CD4-positive, alpha-beta memory T cell (primary cell): ENCODE measurements at regions of chr14 and their contacts with region 1.

Region 1: DNA sequence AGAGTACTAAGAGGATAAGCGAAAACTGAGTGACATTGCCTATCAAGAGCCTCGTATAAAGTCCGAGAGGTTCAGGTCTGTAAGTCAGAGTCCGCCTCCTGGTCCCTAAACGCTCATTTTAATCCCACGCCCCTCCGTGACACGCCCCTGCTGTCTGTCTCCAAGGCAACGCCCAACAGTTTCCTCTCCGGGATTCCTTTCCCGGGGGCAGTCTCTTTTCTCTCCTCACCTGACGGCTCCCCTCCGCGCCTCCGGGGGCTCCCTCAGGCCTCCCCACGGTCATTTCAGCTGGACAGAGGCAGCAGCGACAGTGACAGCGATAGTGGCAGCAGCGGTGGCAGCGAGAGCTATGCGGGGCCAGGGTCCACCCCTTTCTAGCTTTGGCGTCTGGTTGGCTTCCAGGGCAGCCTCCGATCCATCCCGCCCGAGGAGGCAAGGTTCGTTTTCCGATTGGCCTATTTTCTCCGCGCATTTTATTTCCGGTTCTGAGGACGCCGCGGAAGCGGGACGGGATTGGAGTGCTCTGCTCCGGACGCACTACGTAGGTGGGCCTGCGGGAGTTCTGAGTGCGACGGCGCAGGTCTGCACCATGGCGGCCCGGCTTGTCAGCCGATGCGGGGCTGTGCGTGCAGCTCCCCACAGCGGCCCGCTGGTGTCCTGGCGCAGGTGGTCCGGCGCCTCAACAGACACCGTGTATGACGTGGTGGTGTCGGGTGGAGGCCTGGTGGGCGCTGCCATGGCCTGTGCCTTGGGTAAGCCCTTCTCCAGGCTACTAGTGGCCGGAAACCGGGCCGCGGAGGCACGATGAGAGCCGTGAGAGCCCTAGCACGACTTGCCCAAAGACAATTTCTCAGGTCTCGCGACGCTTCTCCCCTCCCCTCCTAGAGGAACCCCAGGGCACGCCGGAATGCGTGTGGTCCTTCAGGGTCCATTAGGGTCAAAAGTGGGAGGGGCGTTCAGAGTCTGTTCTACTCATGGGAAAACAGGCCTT is at the starts of genes COQ6 and FAM161B:
- DNase-seq: peak; percentile 94 to 97 (median 95)
- H3K4me3 ChIP-seq: peak within 1 kb of the TSS; percentile 93 to 99
- H3K4me3 Mint-ChIP-seq: peak within 1 kb of the TSS; percentile 93 to 100 (median 98)
- H3K27ac ChIP-seq: peak within 1 kb of the TSS; percentile 84
- H3K27ac Mint-ChIP-seq: peak within 1 kb of the TSS; percentile 94 to 99 (median 97)
- H3K4me1 ChIP-seq: peaks cover 11% of the 10 kb centered on the region
- H3K4me1 Mint-ChIP-seq: peaks cover 13 to 25% (median 22%) of the 10 kb centered on the region in 4 donors
- H3K27me3 ChIP-seq: no peaks in the 10 kb centered on the region
- H3K27me3 Mint-ChIP-seq: no peaks in the 10 kb centered on the region
- total RNA-seq, gene COQ6: 38.7 to 41.1 TPM
- total RNA-seq, gene FAM161B: 5.8 to 6.5 TPM

Region 2: GRCh38 chr14:73208390-73208789 is 741.6 kb before region 1 on chr14:
- CTCF ChIA-PET with region 1: no interaction called
- POLR2A ChIA-PET with region 1: no interaction called
- intact Hi-C with region 1: no loop called
- DNase-seq: no peak
- H3K4me3 ChIP-seq: no peak overlapping the region
- H3K4me3 Mint-ChIP-seq: no peak overlapping the region
- H3K27ac ChIP-seq: no peak overlapping the region
- H3K27ac Mint-ChIP-seq: no peak overlapping the region
- H3K4me1 ChIP-seq: no peaks in the 10 kb centered on the region
- H3K4me1 Mint-ChIP-seq: no peaks in the 10 kb centered on the region
- H3K27me3 ChIP-seq: no peaks in the 10 kb centered on the region
- H3K27me3 Mint-ChIP-seq: no peaks in the 10 kb centered on the region

Region 3: GRCh38 chr14:73851644-73852382 is 98.2 kb before region 1 on chr14 and contains the start of gene PTGR2:
- CTCF ChIA-PET with region 1: no interaction called
- POLR2A ChIA-PET with region 1: interaction called, 7 read pairs
- intact Hi-C with region 1: loop called (anchors 1 kb)
- DNase-seq: peak; percentile 88 to 93 (median 91)
- H3K4me3 ChIP-seq: peak within 1 kb of the TSS; percentile 42 to 91
- H3K4me3 Mint-ChIP-seq: peak within 1 kb of the TSS; percentile 92 to 99 (median 94)
- H3K27ac ChIP-seq: peak within 1 kb of the TSS; percentile 66
- H3K27ac Mint-ChIP-seq: peak within 1 kb of the TSS; percentile 93 to 99 (median 98)
- H3K4me1 ChIP-seq: peaks cover 17% of the 10 kb centered on the region
- H3K4me1 Mint-ChIP-seq: peaks cover 9 to 24% (median 17%) of the 10 kb centered on the region in 4 donors
- H3K27me3 ChIP-seq: no peaks in the 10 kb centered on the region
- H3K27me3 Mint-ChIP-seq: no peaks in the 10 kb centered on the region
- total RNA-seq, gene PTGR2: 4.5 to 5.0 TPM

Region 4: DNA sequence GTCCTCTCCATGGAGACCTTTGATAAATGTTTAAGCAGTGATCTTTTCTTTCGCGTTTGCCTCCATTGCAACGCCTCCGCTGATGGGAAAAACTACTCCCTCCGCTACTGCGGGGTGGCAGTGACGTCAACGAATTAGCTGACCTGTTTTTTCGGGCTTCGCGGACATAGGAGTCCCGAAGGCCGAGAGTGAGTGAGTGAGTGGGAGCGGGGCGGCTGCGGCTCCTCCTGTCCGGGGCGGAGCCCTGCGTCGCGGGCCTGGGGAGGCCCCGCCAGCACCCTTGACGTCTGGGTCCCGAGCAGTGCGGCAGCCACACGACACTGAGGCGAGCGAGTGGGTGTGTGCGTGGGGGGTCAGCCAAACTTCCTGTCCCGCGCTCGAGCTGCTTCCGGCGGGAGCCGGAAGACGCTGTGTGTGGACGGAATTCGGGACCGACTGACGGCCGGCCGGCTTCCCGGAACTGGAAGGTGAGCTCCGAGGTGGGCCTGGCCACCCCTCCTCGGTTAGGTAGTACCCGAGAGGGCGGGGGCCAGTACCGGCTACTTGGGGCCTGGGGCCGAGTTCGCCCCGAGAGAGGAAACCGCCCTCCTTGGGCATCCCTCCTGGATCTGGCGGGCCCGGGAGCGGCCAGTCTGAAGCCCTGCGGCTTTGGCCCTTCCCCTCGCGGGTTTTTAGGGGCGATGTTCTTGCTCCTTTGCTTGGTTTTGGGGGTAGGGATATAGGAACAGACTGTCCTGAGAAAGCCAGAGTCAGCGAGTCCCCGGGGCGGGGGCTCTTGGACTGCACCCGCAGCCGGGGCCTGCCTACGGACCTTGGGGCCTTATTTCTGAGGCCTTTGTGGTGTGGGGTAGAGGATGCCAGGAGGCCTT is 63.4 kb before region 1 on chr14 and contains the start of gene ZNF410:
- CTCF ChIA-PET with region 1: no interaction called
- POLR2A ChIA-PET with region 1: interaction called, 8 read pairs
- intact Hi-C with region 1: loop called (anchors 2 kb)
- DNase-seq: peak; percentile 84 to 90 (median 86)
- H3K4me3 ChIP-seq: peak within 1 kb of the TSS; percentile 89
- H3K4me3 Mint-ChIP-seq: peak within 1 kb of the TSS; percentile 89 to 99 (median 98)
- H3K27ac ChIP-seq: peak within 1 kb of the TSS; percentile 96
- H3K27ac Mint-ChIP-seq: peak within 1 kb of the TSS; percentile 85 to 100 (median 99)
- H3K4me1 ChIP-seq: peaks cover 43% of the 10 kb centered on the region
- H3K4me1 Mint-ChIP-seq: peaks cover 34 to 55% (median 42%) of the 10 kb centered on the region in 4 donors
- H3K27me3 ChIP-seq: no peaks in the 10 kb centered on the region
- H3K27me3 Mint-ChIP-seq: no peaks in the 10 kb centered on the region
- total RNA-seq, gene ZNF410: 46.2 to 47.3 TPM

Region 5: GRCh38 chr14:74018586-74019407 is 68.8 kb after region 1 on chr14 and contains the starts of genes BBOF1 and ENTPD5:
- CTCF ChIA-PET with region 1: interaction called, 4 read pairs
- POLR2A ChIA-PET with region 1: interaction called, 4 read pairs
- intact Hi-C with region 1: loop called (anchors 1 kb)
- DNase-seq: peak; percentile 88 to 91 (median 91)
- H3K4me3 ChIP-seq: peak within 1 kb of the TSS; percentile 87 to 94
- H3K4me3 Mint-ChIP-seq: peak within 1 kb of the TSS; percentile 93 to 98 (median 94)
- H3K27ac ChIP-seq: peak within 1 kb of the TSS; percentile 92
- H3K27ac Mint-ChIP-seq: peak within 1 kb of the TSS; percentile 94 to 99 (median 99)
- H3K4me1 ChIP-seq: peaks cover 12% of the 10 kb centered on the region
- H3K4me1 Mint-ChIP-seq: peaks cover 6 to 22% (median 11%) of the 10 kb centered on the region in 4 donors
- H3K27me3 ChIP-seq: no peaks in the 10 kb centered on the region
- H3K27me3 Mint-ChIP-seq: no peaks in the 10 kb centered on the region
- total RNA-seq, gene BBOF1: 2.6 TPM
- total RNA-seq, gene ENTPD5: 15.0 to 16.2 TPM

Region 6: GRCh38 chr14:74084277-74085046 is 134.4 kb after region 1 on chr14 and contains the starts of genes ALDH6A1 and LIN52:
- CTCF ChIA-PET with region 1: no interaction called
- POLR2A ChIA-PET with region 1: no interaction called
- intact Hi-C with region 1: loop called (anchors 1 kb)
- DNase-seq: peak; percentile 99 to 100 (median 100)
- H3K4me3 ChIP-seq: peak within 1 kb of the TSS; percentile 68 to 86
- H3K4me3 Mint-ChIP-seq: peak within 1 kb of the TSS; percentile 95 to 99 (median 98)
- H3K27ac ChIP-seq: peak within 1 kb of the TSS; percentile 60
- H3K27ac Mint-ChIP-seq: peak within 1 kb of the TSS; percentile 90 to 99 (median 96)
- H3K4me1 ChIP-seq: peaks cover 25% of the 10 kb centered on the region
- H3K4me1 Mint-ChIP-seq: peaks cover 20 to 48% (median 33%) of the 10 kb centered on the region in 4 donors
- H3K27me3 ChIP-seq: no peaks in the 10 kb centered on the region
- H3K27me3 Mint-ChIP-seq: no peaks in the 10 kb centered on the region
- total RNA-seq, gene ALDH6A1: 21.7 to 22.5 TPM
- total RNA-seq, gene LIN52: 9.4 to 11.0 TPM